GM12878 (cell line): ENCODE measurements at regions of chr2 and their contacts with region 1.

Region 1: DNA sequence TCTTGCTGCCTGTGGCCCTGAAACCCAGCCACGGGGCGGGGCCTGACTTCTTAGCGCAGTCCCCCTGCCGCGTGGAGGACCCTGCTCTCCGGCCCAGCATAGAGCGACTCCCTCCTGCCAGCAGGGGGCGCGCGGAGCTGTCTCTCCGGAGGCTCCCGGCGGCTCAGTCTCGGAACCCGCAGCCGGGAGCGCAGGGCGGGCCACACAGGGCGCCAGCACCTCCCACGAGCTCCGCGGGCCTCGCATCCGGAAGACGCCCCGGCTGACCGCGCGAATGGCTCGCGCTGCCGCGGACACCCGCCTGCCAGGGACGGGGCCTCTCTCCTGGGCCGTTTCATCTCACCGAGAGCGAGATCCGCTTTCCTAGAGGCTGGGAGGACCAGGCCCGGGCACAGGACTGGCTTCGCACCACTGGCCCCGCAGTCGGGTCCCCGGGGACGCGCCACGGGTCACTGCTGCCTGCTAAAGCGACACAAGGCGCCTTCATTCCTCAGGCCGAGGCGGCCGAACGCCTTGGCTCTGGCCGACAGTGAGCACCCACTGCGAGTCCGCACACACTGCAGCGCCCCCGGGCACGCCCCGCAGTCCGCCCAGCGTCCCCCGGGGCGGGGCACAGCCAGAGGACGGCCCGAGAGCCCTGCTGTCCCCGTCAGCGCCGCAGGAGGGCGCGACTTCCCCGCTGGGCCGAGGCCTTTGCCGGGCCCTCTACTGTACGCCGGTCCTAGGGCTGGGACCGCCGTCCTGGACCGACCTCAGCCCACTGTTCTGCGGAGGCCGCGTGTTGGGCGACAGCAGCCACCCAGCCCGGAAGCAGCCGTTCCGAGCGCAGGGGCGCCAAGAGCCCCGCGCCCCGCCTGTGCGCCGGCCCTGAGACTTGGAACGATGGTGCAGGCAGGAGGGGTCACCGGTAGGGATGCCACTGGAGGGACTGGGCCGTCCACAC is 39.0 kb upstream of the ARHGEF4 start:
- DNase-seq: peak; percentile 19
- ATAC-seq: peak; percentile 94
- H3K4me3 ChIP-seq: peak overlapping the region; percentile 71
- H3K27ac ChIP-seq: peak overlapping the region; percentile 59
- H3K4me1 ChIP-seq: no peaks in the 10 kb centered on the region
- H3K27me3 ChIP-seq: no peaks in the 10 kb centered on the region
- CTCF ChIP-seq: peak; percentile 84 to 97 (median 95); a peak in 5 of 6 replicates
- EP300 ChIP-seq: no peak
- POLR2A ChIP-seq: peak; percentile 65
- RAD21 ChIP-seq: peak; percentile 83

Region 2: DNA sequence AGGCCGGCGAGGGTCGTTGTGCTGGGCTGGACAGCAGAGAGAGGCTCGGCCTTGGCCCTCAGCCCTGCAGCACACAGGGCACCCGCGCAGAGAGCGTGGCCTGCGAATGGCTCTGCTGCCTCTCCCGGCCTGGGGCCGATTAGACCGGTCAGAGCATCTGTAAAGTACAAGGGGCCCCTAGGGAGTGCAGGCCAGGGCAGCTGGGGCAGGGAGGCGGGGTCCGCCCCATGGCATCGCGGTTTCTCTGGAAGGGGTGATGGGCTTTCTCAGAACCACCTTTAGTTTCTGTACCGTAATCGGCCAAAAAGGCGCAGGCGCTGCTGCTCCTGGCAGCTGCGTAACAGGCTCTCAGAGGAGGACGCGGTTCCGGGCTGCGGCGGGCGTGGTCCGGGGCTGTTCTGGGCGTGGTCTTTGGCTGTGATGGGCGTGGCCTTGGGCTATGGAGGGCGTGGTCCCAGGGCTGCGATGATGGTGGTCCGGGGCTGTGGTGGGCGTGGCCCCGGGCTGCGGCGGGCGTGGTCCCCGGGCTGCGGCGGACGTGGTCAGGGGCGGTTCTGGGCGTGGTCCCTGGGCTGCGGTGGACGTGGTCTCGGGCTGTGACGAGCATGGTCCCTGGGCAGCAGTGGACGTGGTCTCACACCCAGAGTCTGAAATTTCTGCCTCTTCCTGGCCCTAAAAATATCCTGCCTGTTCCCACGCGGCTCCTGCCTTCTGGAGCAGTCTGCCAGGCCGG is 70.3 kb before region 1 on chr2:
- CTCF ChIA-PET with region 1: no interaction called
- POLR2A ChIA-PET with region 1: no interaction called
- RAD21 ChIA-PET with region 1: no interaction called
- SMC1A ChIA-PET with region 1: no interaction called
- in situ Hi-C with region 1: no loop called
- intact Hi-C with region 1: no loop called
- DNase-seq: peak; percentile 48
- ATAC-seq: peak; percentile 96
- H3K4me3 ChIP-seq: peak overlapping the region; percentile 80
- H3K27ac ChIP-seq: peak overlapping the region; percentile 11; the same call in 1 of the 2 replicates
- H3K4me1 ChIP-seq: peaks cover 9% of the 10 kb centered on the region
- H3K27me3 ChIP-seq: no peaks in the 10 kb centered on the region
- CTCF ChIP-seq: 0 out of 6 replicates have a peak, but pooled peaks of 2 of the 3 experiments have one; percentile 1 to 3
- EP300 ChIP-seq: no peak
- POLR2A ChIP-seq: peak; percentile 71
- RAD21 ChIP-seq: no peak

Region 3: DNA sequence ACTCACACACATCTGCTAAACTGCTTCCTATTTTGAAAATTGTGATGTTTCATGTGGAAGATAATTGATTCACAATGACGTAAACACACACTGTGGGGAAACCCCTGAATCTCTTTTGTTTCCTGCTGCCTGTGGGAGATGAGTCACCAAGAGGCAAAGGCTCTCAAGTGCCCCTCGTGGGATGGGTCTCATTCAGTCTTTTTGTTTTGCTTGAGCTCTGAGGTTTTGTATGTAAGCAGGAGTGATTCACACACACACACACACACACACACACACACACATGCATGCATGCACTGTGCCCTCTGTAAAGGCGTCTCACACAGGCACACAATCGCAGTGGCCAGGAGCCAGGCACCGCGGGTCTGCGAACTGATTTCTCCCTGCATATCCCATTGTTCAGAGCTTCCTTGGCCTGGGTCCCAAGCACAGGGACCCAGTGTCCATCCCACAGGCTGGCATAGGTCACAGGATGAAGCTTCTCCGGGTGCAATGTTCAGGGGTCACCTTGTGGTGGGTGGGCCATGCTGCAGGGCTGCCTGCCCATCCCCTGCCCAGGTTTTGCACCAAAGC is 26.8 kb after region 1 on chr2:
- CTCF ChIA-PET with region 1: interaction called, 22 read pairs
- POLR2A ChIA-PET with region 1: no interaction called
- RAD21 ChIA-PET with region 1: interaction called, 32 read pairs
- SMC1A ChIA-PET with region 1: interaction called, 10 read pairs
- in situ Hi-C with region 1: no loop called
- intact Hi-C with region 1: loop called (anchors 1 kb)
- DNase-seq: peak; percentile 86
- ATAC-seq: peak; percentile 81
- H3K4me3 ChIP-seq: no peak overlapping the region
- H3K27ac ChIP-seq: no peak overlapping the region
- H3K4me1 ChIP-seq: peaks cover 15% of the 10 kb centered on the region
- H3K27me3 ChIP-seq: no peaks in the 10 kb centered on the region
- CTCF ChIP-seq: no peak
- EP300 ChIP-seq: peak in 1 of 2 experiments; percentile 85; a peak in 2 of 4 replicates
- POLR2A ChIP-seq: no peak
- RAD21 ChIP-seq: no peak

Region 4: GRCh38 chr2:130920415-130921163 is 122.8 kb after region 1 on chr2:
- CTCF ChIA-PET with region 1: interaction called, 89 read pairs
- POLR2A ChIA-PET with region 1: no interaction called
- RAD21 ChIA-PET with region 1: interaction called, 17 read pairs
- SMC1A ChIA-PET with region 1: interaction called, 11 read pairs
- in situ Hi-C with region 1: loop called (anchors 5 kb)
- intact Hi-C with region 1: loop called (anchors 1 kb)
- DNase-seq: peak; percentile 3
- ATAC-seq: peak; percentile 66; the same call in 2 of the 3 replicates
- H3K4me3 ChIP-seq: no peak overlapping the region
- H3K27ac ChIP-seq: no peak overlapping the region
- H3K4me1 ChIP-seq: no peaks in the 10 kb centered on the region
- H3K27me3 ChIP-seq: no peaks in the 10 kb centered on the region
- CTCF ChIP-seq: peak; percentile 80 to 84 (median 84)
- EP300 ChIP-seq: no peak
- POLR2A ChIP-seq: no peak
- RAD21 ChIP-seq: peak; percentile 63

Region 5: GRCh38 chr2:130930740-130931659 is 133.2 kb after region 1 on chr2:
- CTCF ChIA-PET with region 1: interaction called, 12 read pairs
- POLR2A ChIA-PET with region 1: no interaction called
- RAD21 ChIA-PET with region 1: interaction called, 6 read pairs
- SMC1A ChIA-PET with region 1: no interaction called
- in situ Hi-C with region 1: no loop called
- intact Hi-C with region 1: no loop called
- DNase-seq: no peak
- ATAC-seq: no peak
- H3K4me3 ChIP-seq: no peak overlapping the region
- H3K27ac ChIP-seq: no peak overlapping the region
- H3K4me1 ChIP-seq: no peaks in the 10 kb centered on the region
- H3K27me3 ChIP-seq: no peaks in the 10 kb centered on the region; a peak in 1 of 4 replicates
- CTCF ChIP-seq: no peak
- EP300 ChIP-seq: no peak
- POLR2A ChIP-seq: no peak
- RAD21 ChIP-seq: no peak